ENCODE measurements at regions of chr9 and their contacts with region 1.

Region 1: GRCh38 chr9:121059998-121060636 is 10.0 kb upstream of the C5 start:
- DNase-seq: peak; percentile 80
- H3K4me3 ChIP-seq: no peak overlapping the region
- H3K27ac ChIP-seq: no peak overlapping the region
- H3K4me1 ChIP-seq: peaks cover 27% of the 10 kb centered on the region
- H3K27me3 ChIP-seq: no peaks in the 10 kb centered on the region
- CTCF ChIP-seq: peak; percentile 60 to 63
- POLR2A ChIP-seq: no peak

Region 2: DNA sequence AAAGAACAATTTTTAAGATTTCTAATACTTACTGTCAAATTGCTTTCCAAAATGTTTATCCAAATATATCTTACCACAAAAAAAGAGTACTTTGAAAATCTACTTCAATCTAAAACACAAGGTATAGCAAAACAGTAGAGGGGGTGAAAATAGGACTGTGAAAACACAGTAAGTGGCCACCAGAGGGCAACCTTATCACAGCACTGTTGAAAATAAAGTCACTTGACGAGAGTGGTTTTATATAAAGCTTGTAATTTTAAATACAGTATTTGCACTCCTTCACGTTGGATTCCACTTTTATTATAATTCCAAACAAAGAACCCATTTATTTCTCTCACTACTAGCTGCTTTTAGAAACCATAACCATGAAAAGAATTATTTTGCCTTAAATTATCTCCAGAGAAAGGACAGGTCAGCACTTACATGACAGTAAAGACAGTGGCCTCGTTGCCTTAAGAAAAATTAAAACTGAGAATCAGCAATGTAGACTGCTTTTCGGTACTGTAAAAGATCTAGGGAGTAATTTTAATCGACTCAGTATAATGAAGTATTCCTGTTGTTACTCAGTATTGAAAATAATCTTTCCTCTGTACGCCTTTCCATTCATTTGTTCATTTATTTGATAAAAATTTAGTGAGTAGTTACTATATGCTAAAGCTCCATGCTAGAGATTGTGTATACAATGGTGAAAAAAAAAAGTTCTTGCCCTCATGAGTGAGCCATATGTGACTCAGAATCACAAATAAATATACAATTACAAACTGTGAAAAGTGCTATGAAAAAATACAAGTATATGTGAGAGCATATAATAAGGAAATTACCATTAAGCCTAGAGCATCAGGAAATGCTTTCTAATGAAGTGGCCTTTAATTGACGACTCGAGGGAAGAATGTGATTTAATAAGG is 440.1 kb before region 1 on chr9:
- CTCF ChIA-PET with region 1: interaction called, 18 read pairs
- POLR2A ChIA-PET with region 1: no interaction called
- dilution Hi-C with region 1: no loop called
- intact Hi-C with region 1: loop called (anchors 5 kb)
- DNase-seq: peak; percentile 81
- H3K4me3 ChIP-seq: no peak overlapping the region
- H3K27ac ChIP-seq: no peak overlapping the region
- H3K4me1 ChIP-seq: no peaks in the 10 kb centered on the region
- H3K27me3 ChIP-seq: no peaks in the 10 kb centered on the region
- CTCF ChIP-seq: peak; percentile 67 to 68
- POLR2A ChIP-seq: no peak

Region 3: DNA sequence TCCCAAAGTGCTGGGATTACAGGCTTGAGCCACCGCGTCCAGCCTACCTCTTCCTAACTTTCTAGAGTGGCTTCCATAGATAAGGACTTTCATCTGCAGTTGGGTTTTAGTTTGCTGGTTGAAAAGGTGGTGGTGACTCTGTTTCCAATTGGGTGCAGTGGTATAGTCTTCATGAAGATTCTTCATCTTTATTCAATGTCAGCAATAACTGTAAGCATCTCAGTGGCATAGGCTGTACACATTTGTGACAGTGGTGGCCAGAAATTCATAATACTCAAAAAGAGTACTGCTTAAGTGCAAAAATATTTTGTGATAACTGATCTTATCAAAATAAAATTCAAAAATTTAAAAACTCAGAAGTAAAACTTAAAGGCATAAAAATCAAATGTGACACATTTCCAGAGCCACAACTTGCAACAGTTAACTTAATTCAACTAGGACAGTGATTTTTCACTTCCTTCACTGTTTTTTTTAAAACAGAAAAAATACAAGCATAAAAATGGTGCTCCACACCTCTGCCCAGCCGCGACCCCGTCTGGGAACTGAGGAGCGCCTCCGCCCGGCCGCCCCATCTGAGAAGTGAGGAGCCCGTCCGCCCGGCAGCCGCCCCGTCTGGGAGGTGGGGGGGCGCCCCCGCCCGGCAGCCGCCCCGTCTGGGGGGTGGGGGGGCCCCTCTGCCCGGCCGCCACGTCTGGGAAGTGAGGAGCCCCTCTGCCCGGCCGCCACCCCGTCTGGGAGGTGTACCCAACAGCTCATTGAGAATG is 423.7 kb before region 1 on chr9:
- CTCF ChIA-PET with region 1: no interaction called
- POLR2A ChIA-PET with region 1: no interaction called
- dilution Hi-C with region 1: no loop called
- intact Hi-C with region 1: no loop called
- DNase-seq: no peak
- H3K4me3 ChIP-seq: no peak overlapping the region
- H3K27ac ChIP-seq: no peak overlapping the region
- H3K4me1 ChIP-seq: no peaks in the 10 kb centered on the region
- H3K27me3 ChIP-seq: no peaks in the 10 kb centered on the region
- CTCF ChIP-seq: no peak
- POLR2A ChIP-seq: no peak

Region 4: GRCh38 chr9:120755827-120756434 is 304.2 kb before region 1 on chr9:
- CTCF ChIA-PET with region 1: interaction called, 127 read pairs
- POLR2A ChIA-PET with region 1: no interaction called
- dilution Hi-C with region 1: no loop called
- intact Hi-C with region 1: loop called (anchors 1 kb)
- DNase-seq: peak; percentile 65
- H3K4me3 ChIP-seq: no peak overlapping the region
- H3K27ac ChIP-seq: no peak overlapping the region
- H3K4me1 ChIP-seq: no peaks in the 10 kb centered on the region
- H3K27me3 ChIP-seq: no peaks in the 10 kb centered on the region
- CTCF ChIP-seq: peak; percentile 70 to 74
- POLR2A ChIP-seq: no peak

Region 5: GRCh38 chr9:120916588-120916987 is 143.5 kb before region 1 on chr9:
- CTCF ChIA-PET with region 1: interaction called, 11 read pairs
- POLR2A ChIA-PET with region 1: no interaction called
- dilution Hi-C with region 1: no loop called
- intact Hi-C with region 1: no loop called
- DNase-seq: no peak
- H3K4me3 ChIP-seq: no peak overlapping the region
- H3K27ac ChIP-seq: no peak overlapping the region
- H3K4me1 ChIP-seq: no peaks in the 10 kb centered on the region
- H3K27me3 ChIP-seq: no peaks in the 10 kb centered on the region
- CTCF ChIP-seq: no peak
- POLR2A ChIP-seq: no peak

Region 6: DNA sequence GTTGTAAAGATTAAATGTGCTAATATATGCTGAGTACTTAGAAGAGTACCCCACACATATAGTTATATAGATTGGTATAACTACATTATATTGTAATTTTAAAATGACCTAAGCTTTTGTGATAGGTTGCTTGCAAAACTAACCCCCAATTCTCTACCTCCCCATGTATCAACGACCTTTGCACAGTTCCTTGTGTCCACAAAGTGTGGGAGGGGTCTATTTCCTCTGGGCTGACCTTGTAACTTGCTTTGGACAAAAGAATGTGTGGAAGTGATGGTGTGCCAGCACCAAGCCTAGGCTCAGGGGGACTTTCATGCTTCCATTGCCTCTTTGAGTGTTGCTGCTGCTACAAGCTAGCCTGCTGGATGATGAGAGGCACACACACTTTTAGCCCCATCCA is 30.6 kb before region 1 on chr9:
- CTCF ChIA-PET with region 1: interaction called, 29 read pairs
- POLR2A ChIA-PET with region 1: no interaction called
- dilution Hi-C with region 1: no loop called
- intact Hi-C with region 1: no loop called
- DNase-seq: no peak
- H3K4me3 ChIP-seq: no peak overlapping the region
- H3K27ac ChIP-seq: no peak overlapping the region
- H3K4me1 ChIP-seq: no peaks in the 10 kb centered on the region
- H3K27me3 ChIP-seq: no peaks in the 10 kb centered on the region
- CTCF ChIP-seq: no peak
- POLR2A ChIP-seq: no peak

Region 7: DNA sequence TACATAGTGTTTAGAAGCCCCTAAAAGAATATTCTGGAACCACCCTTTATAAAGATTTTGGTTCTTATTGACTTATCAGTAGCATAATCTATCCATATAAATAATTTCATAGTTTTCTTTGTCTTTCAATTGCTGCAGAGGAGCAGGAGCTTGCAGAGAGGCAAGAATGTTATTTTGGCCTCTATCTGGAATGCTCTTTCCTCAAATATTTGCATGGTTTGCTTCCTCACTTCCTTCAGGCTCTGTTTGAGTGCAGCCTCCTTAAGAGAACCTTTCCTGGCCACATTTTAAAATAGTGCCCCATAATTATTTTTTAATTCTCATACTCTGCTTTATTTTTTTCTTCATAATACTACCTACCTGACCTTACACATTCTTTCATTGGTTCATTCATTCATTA is 11.5 kb before region 1 on chr9:
- CTCF ChIA-PET with region 1: interaction called, 42 read pairs
- POLR2A ChIA-PET with region 1: no interaction called
- dilution Hi-C with region 1: no loop called
- intact Hi-C with region 1: no loop called
- DNase-seq: no peak
- H3K4me3 ChIP-seq: no peak overlapping the region
- H3K27ac ChIP-seq: no peak overlapping the region
- H3K4me1 ChIP-seq: no peaks in the 10 kb centered on the region
- H3K27me3 ChIP-seq: no peaks in the 10 kb centered on the region
- CTCF ChIP-seq: no peak
- POLR2A ChIP-seq: no peak

Region 8: DNA sequence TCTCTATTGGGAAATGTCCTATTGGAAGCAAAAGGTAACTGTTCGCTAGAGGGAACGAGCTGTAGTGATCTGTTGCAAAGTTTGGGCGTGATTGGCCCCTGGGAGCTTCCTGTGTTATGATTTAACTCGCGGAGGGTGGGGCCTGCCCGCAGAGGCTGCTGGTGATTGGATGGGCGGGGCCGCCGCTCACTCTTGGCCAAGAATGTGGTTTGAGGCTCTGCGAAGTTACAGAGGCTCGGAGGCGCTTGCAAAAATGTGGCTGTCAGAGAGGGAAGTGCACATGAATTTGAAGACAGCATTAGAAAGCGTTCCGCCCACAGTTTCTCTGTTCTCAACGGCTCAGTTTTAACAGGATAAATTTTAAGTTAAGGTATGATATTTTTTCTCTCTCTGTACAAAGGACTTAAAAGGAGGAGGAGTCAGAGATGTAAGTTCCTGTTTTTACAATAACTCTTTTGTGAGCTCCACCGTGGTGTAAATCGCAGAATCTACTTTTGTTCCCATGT is 61.5 kb after region 1 on chr9:
- CTCF ChIA-PET with region 1: interaction called, 11 read pairs
- POLR2A ChIA-PET with region 1: no interaction called
- dilution Hi-C with region 1: no loop called
- intact Hi-C with region 1: no loop called
- DNase-seq: peak; percentile 98
- H3K4me3 ChIP-seq: peak overlapping the region; percentile 38 to 93 (median 79)
- H3K27ac ChIP-seq: peak overlapping the region; percentile 59
- H3K4me1 ChIP-seq: peaks cover 11% of the 10 kb centered on the region
- H3K27me3 ChIP-seq: no peaks in the 10 kb centered on the region
- CTCF ChIP-seq: no peak
- POLR2A ChIP-seq: peak; percentile 65